ENCODE measurements at regions of chr11 and their contacts with region 1.

Region 1: DNA sequence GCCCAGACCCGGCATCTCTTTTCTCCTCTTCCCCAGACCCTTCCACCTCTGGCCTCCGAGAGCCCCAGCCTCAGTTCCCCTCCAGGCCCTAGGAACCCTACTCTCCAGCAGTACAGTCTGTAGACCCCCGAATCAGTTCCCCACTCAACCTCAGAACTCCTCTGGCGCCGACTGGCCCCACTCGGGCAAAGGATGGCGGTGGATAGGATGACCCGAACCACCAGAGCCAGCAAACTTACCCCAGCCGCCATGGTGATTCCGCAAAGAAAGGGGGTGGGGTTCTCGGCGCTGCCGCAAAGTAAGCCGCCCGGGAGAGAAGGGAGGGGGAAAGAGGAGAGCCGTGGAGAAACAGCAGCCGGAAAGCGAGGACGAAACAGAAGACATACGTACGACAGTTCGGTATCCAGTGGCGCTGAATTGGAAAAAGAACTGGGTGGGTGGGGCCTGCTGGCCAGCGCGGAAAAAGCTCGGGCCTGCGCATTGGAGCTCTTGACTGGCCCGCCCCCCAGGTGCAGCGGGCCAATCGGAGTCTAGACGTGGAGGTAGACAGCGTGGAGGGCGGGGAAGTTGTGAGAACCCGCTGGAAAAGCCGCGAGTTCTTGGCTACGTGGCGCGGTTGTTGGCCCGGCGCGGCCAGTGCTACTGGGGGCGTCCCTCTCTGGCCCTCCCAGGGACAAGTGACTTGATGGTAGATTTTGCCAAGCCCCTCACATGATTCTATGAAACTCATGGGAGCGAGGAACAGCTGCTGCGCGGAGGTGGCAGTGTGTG is at the start of gene EEF1G:
- DNase-seq: peak; percentile 99
- H3K4me3 Mint-ChIP-seq: peak within 1 kb of the TSS; percentile 93
- H3K27ac Mint-ChIP-seq: peak within 1 kb of the TSS; percentile 96
- H3K4me1 Mint-ChIP-seq: peaks cover 50% of the 10 kb centered on the region
- H3K27me3 Mint-ChIP-seq: no peaks in the 10 kb centered on the region
- total RNA-seq, gene EEF1G: 1,956 to 1,989 TPM

Region 2: GRCh38 chr11:62461740-62462507 is 111.9 kb before region 1 on chr11:
- CTCF ChIA-PET with region 1: no interaction called
- POLR2A ChIA-PET with region 1: no interaction called
- intact Hi-C with region 1: no loop called
- DNase-seq: no peak
- H3K4me3 Mint-ChIP-seq: no peak overlapping the region
- H3K27ac Mint-ChIP-seq: no peak overlapping the region
- H3K4me1 Mint-ChIP-seq: peaks cover 4% of the 10 kb centered on the region
- H3K27me3 Mint-ChIP-seq: no peaks in the 10 kb centered on the region

Region 3: GRCh38 chr11:62508268-62509058 is 65.3 kb before region 1 on chr11:
- CTCF ChIA-PET with region 1: no interaction called
- POLR2A ChIA-PET with region 1: no interaction called
- intact Hi-C with region 1: no loop called
- DNase-seq: no peak
- H3K4me3 Mint-ChIP-seq: no peak overlapping the region
- H3K27ac Mint-ChIP-seq: no peak overlapping the region
- H3K4me1 Mint-ChIP-seq: peaks cover 4% of the 10 kb centered on the region
- H3K27me3 Mint-ChIP-seq: no peaks in the 10 kb centered on the region

Region 4: DNA sequence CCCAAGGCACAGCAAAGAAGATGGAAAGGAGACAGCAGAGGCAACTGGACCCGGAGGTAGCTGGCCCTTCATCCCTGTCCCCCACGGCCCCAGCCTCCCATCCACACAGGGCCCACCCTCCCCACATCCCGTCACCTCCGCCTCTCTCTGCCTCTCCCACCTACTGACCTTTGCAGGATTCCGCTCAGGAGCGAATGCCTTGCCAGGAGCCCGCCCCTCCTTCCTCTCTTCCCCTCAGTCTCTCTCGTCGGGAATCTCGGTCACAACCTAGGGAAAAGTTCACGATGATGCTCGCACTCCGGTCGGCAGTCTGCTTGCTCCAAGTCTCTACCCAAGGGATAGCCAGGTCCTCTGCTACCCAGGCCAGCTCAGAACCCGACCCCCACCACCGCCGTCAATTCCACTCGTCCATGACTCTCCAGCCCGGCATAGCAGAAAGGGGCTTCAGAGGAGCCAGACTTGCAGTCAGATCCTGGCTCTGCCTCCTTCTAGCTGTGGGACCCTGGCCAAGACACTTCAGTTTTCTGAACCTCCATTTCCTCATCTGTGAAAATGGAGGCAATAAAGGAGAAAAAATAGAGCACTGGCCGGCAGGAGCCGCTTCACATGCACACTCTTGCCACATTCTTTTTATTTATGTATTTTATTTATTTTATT is 37.3 kb before region 1 on chr11:
- CTCF ChIA-PET with region 1: no interaction called
- POLR2A ChIA-PET with region 1: no interaction called
- intact Hi-C with region 1: no loop called
- DNase-seq: no peak
- H3K4me3 Mint-ChIP-seq: no peak overlapping the region
- H3K27ac Mint-ChIP-seq: no peak overlapping the region
- H3K4me1 Mint-ChIP-seq: peaks cover 44% of the 10 kb centered on the region
- H3K27me3 Mint-ChIP-seq: no peaks in the 10 kb centered on the region

Region 5: DNA sequence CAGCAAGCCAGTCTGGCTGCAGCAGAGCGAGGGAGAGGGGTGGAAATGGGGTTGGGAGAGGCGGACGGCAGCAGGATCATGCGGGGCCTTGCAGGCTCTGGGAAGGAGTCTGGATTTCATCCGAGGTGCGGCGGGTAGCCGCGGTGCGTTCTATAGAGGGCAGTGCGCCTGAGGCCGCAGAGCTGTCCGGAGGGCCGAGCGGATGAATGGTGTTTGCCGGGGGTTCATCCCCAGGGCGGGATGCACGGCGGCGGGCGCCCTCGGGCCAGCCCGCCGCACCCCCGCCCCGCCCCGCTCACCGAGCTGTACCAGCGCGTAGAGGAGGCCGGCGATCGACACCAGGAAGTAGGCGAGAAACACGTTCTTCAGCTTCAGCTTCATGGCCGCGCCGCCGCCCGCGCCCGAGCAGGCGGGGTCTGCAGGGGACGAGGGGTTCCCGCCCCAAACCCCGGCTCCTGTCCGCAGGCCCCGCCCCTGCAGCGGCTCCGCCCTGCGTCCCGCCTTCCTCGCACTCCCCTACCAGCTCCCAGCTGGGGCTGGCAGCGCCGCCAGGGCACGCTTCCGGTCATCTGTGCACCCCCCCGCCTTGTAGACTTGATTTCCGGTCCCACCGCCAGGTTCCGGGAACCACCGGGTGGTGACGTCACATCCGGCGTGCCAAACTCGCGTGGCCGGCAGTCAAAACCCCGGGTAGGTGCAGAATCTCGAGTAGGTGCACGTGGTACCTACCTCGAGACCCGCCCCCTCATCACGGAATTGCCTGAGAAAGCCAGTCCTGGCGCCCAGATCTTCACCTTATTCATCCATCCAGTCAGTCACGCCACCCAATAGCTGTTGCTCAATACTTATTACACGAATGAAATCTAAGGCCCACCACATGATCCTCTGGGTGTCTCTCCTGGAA is 48.0 kb after region 1 on chr11 and contains the start of gene B3GAT3:
- CTCF ChIA-PET with region 1: interaction called, 3 read pairs
- POLR2A ChIA-PET with region 1: interaction called, 6 read pairs
- intact Hi-C with region 1: loop called (anchors 1 kb)
- DNase-seq: peak; percentile 98
- H3K4me3 Mint-ChIP-seq: peak within 1 kb of the TSS; percentile 97
- H3K27ac Mint-ChIP-seq: peak within 1 kb of the TSS; percentile 96
- H3K4me1 Mint-ChIP-seq: peaks cover 22% of the 10 kb centered on the region
- H3K27me3 Mint-ChIP-seq: no peaks in the 10 kb centered on the region
- total RNA-seq, gene B3GAT3: 67.0 to 70.4 TPM